Right lobe of liver (tissue), 6 donors: ENCODE measurements at regions of chr11 and their contacts with region 1.

Region 1: DNA sequence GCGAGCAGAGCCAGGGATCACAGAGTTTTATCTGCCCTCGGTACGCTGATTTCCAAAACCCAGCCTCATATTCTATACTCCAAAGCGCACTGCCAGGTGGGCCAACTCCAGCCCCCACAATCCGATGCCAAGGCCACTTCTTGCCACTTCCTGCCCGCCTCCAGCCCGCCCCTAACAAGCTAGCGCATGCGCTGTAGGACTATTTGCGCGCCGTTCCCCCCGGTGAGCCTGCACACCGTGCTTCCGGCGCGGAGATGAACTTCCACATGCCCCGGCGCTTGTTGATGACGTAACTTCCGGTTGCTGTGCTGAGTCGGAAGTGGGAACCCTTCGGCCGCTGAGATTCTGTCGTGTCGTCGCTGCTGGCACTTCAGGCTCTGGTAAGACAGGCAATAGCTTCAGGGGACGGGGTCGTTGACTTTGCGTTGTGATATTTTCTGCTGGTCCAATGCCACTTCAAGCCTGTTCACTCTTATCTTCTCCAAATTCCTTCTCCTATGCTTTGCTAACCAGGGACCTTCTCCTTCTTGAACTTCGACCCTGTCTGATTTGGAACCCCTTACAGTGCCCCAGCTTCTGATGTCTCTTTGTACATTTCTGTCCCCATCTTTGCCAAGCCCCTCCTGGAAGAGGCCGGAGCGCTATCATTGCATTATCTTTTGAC is at the start of gene UBE4A:
- DNase-seq: peak; percentile 96 to 97 (median 96)
- ATAC-seq: peak; percentile 94 to 98 (median 98)
- H3K4me3 ChIP-seq: peak within 1 kb of the TSS; percentile 71 to 84 (median 74)
- H3K27ac ChIP-seq: peak within 1 kb of the TSS; percentile 18 to 58 (median 33)
- H3K4me1 ChIP-seq: peaks cover 0 to 12% (median 3%) of the 10 kb centered on the region in 4 donors
- H3K27me3 ChIP-seq: no peaks in the 10 kb centered on the region
- CTCF ChIP-seq: no peak
- POLR2A ChIP-seq: peak; percentile 68
- total RNA-seq, gene UBE4A: 25.5 to 36.9 (median 28.5) TPM

Region 2: GRCh38 chr11:118304568-118305248 is 54.7 kb before region 1 on chr11 and contains the start of gene CD3E:
- intact Hi-C with region 1: loop called (anchors 5 to 10 kb)
- DNase-seq: no peak
- ATAC-seq: no peak
- H3K4me3 ChIP-seq: no peak within 1 kb of the TSS
- H3K27ac ChIP-seq: no peak within 1 kb of the TSS
- H3K4me1 ChIP-seq: no peaks in the 10 kb centered on the region
- H3K27me3 ChIP-seq: no peaks in the 10 kb centered on the region
- CTCF ChIP-seq: no peak
- POLR2A ChIP-seq: no peak
- total RNA-seq, gene CD3E: 0.55 to 1.5 (median 0.90) TPM